Heart right ventricle (tissue), 16 donors: ENCODE measurements at regions of chr6 and their contacts with region 1.

Region 1: DNA sequence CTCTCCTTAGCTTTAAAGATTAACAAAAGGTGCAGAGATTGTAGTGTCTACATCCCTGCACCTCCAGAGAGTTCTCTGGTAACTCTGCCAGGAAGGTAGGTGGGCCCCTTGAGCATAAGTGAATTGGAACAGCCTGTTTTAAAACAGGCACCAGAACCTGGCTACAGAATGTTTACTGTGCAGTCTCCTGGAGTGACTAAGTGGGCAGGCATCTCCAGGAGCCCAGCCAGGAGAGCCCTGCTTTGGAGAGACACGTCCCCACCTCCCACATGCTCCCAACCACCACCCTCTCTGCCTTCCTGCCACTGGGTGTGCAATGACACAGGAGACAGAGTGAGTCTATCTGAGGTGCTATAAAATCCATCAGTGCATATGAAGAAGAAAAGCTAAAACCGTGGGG is 110.3 kb upstream of the EYA4 start:
- DNase-seq: peak; percentile 66 to 78
- ATAC-seq: peak; percentile 93 to 99 (median 98)
- H3K4me3 ChIP-seq: no peak overlapping the region
- H3K27ac ChIP-seq: peak overlapping the region in 8 of 10 donors; percentile 51 to 83 (median 69)
- H3K4me1 ChIP-seq: peaks cover 0 to 40% (median 7%) of the 10 kb centered on the region in 9 donors
- H3K27me3 ChIP-seq: no peaks in the 10 kb centered on the region
- CTCF ChIP-seq: peak in 3 of 9 donors; percentile 41 to 51 (median 44)

Region 2: GRCh38 chr6:133055441-133055966 is 75.4 kb before region 1 on chr6:
- intact Hi-C with region 1: loop called in 3 of 10 experiments (anchors 5 to 10 kb)
- DNase-seq: no peak
- ATAC-seq: peak in 7 of 8 donors; percentile 37 to 69 (median 54)
- H3K4me3 ChIP-seq: no peak overlapping the region
- H3K27ac ChIP-seq: peak overlapping the region in 7 of 10 donors; percentile 24 to 63 (median 54)
- H3K4me1 ChIP-seq: peaks cover 0 to 11% (median 0%) of the 10 kb centered on the region in 9 donors
- H3K27me3 ChIP-seq: no peaks in the 10 kb centered on the region
- CTCF ChIP-seq: no peak

Region 3: DNA sequence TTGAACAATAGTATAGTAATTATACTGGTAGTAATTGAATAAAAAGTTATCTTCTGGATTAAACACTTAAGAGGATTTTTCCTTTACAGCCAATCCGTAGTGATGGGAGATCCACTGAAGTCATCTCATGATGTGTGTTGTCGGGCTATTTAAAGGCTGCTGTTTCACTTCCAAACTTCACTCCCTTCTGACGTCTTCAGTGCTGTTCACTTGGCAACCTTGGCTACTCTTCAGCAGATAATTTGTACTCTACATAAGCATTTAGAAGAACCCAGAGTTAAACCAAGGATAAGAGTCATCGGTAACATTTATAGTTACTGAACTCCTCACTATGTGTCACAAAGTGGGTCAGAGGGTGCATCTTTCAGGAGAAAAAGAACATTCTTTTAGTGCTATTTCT is 68.8 kb before region 1 on chr6:
- intact Hi-C with region 1: loop called in 4 of 10 experiments (anchors 2 to 10 kb)
- DNase-seq: peak in 1 of 2 donors; percentile 60
- ATAC-seq: peak; percentile 79 to 98 (median 96)
- H3K4me3 ChIP-seq: no peak overlapping the region
- H3K27ac ChIP-seq: peak overlapping the region in 9 of 10 donors; percentile 13 to 78 (median 62)
- H3K4me1 ChIP-seq: peaks cover 0 to 12% (median 0%) of the 10 kb centered on the region in 9 donors
- H3K27me3 ChIP-seq: no peaks in the 10 kb centered on the region
- CTCF ChIP-seq: no peak

Region 4: GRCh38 chr6:133159255-133159795 is 28.5 kb after region 1 on chr6:
- intact Hi-C with region 1: no loop called
- DNase-seq: no peak
- ATAC-seq: no peak
- H3K4me3 ChIP-seq: no peak overlapping the region
- H3K27ac ChIP-seq: no peak overlapping the region
- H3K4me1 ChIP-seq: no peaks in the 10 kb centered on the region
- H3K27me3 ChIP-seq: no peaks in the 10 kb centered on the region
- CTCF ChIP-seq: no peak

Region 5: DNA sequence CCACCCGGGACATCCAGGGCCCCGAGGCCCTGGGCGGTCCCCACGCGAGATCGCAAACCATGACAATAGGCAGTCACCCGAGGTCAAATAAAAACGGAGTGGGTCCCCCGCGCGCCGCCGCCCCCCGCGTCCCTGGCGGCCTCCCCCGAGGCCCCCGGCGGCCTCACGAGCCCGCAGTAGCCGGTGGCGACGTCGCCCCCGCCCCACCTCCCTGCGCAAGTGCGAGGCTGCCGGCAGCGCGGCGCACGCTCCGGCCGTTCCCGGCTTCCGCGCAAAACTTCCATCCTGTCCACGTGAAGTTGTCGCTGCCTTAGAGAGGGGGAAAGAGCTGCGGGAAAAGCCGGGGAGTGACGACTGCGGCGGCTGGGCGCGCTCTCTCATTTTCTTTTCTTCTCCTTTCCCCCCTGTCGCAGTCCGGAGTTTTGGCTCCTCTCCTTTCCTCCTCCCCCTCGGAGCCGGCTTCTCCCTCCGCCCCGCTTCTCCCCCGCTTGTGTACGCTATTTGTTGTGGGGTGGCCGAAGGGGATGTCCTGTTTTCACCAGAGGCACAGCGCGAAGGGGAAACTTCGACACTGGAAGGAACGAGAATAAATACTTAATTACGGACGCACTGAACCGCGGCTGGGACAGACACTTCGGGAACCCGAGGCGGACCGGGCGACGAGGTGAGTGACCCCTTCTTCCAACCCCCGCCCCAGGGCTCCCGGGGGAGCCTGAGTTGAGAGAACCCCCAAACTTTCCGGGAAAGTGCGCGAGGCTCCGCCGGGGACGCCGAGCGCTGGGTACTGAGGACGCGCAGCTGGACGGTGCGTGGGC is 110.4 kb after region 1 on chr6 and contains the start of gene EYA4:
- intact Hi-C with region 1: loop called in 1 of 10 experiments (anchors 5 kb)
- DNase-seq: peak; percentile 27 to 50
- ATAC-seq: peak; percentile 64 to 88 (median 71)
- H3K4me3 ChIP-seq: peak within 1 kb of the TSS; percentile 24 to 73 (median 62)
- H3K27ac ChIP-seq: peak within 1 kb of the TSS; percentile 66 to 93 (median 86)
- H3K4me1 ChIP-seq: peaks cover 0 to 19% (median 3%) of the 10 kb centered on the region in 9 donors
- H3K27me3 ChIP-seq: peaks cover 0 to 66% (median 54%) of the 10 kb centered on the region in 7 donors
- CTCF ChIP-seq: peak in 2 of 9 donors; percentile 7 to 26
- total RNA-seq, gene EYA4: 10.6 to 30.2 (median 19.6) TPM